ENCODE measurements at regions of chr5 and their contacts with region 1.

Region 1: GRCh38 chr5:155316070-155316714 is 302.6 kb downstream of the KIF4B start:
- DNase-seq: no peak
- H3K4me3 ChIP-seq: no peak overlapping the region
- H3K27ac ChIP-seq: no peak overlapping the region
- H3K4me1 ChIP-seq: no peaks in the 10 kb centered on the region
- H3K27me3 ChIP-seq: no peaks in the 10 kb centered on the region
- CTCF ChIP-seq: no peak
- EP300 ChIP-seq: no peak
- POLR2A ChIP-seq: no peak
- RAD21 ChIP-seq: no peak

Region 2: GRCh38 chr5:155189981-155190380 is 126.2 kb before region 1 on chr5:
- CTCF ChIA-PET with region 1: no interaction called
- POLR2A ChIA-PET with region 1: no interaction called
- DNase-seq: no peak
- H3K4me3 ChIP-seq: no peak overlapping the region
- H3K27ac ChIP-seq: no peak overlapping the region
- H3K4me1 ChIP-seq: peaks cover 0 to 11% (median 2%) of the 10 kb centered on the region in 4 experiments; a peak in 5 of 7 replicates
- H3K27me3 ChIP-seq: no peaks in the 10 kb centered on the region
- CTCF ChIP-seq: no peak
- EP300 ChIP-seq: no peak
- POLR2A ChIP-seq: no peak
- RAD21 ChIP-seq: no peak

Region 3: DNA sequence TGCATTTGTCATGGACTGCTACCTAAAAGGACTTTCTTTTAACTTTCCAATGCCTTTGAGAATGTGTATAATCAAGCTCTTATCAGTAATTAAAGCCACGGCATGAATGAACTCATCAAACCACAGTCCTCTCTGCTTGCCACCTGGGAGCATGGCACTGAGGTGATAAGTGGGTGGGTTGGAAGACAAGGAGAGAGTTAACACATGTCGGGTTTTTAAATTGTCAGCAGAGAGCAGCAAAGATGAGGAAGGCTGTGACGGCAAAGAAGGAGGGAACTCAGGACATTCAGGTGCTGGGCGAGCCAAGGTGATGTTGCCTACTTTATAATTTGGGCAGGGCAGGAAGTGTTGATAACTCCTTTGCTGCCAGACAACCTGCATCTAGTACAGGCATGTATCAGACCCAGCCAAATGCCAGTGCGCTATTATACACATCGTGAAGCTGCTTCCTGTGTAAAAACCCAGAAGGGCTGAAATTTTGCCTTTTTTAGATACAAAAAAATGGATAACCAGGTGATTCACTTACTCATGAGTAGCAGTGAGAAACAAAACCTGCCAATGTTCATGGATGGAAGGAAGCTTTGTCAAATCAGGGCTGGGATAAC is 33.6 kb before region 1 on chr5:
- CTCF ChIA-PET with region 1: no interaction called
- POLR2A ChIA-PET with region 1: no interaction called
- DNase-seq: no peak
- H3K4me3 ChIP-seq: no peak overlapping the region
- H3K27ac ChIP-seq: no peak overlapping the region
- H3K4me1 ChIP-seq: peaks cover 0 to 9% (median 3%) of the 10 kb centered on the region in 4 experiments; a peak in 2 of 7 replicates
- H3K27me3 ChIP-seq: no peaks in the 10 kb centered on the region
- CTCF ChIP-seq: no peak
- EP300 ChIP-seq: no peak
- POLR2A ChIP-seq: no peak
- RAD21 ChIP-seq: no peak

Region 4: GRCh38 chr5:155303120-155303519 is 13.1 kb before region 1 on chr5:
- CTCF ChIA-PET with region 1: interaction called, 13 read pairs
- POLR2A ChIA-PET with region 1: no interaction called
- DNase-seq: no peak
- H3K4me3 ChIP-seq: no peak overlapping the region
- H3K27ac ChIP-seq: no peak overlapping the region
- H3K4me1 ChIP-seq: no peaks in the 10 kb centered on the region
- H3K27me3 ChIP-seq: no peaks in the 10 kb centered on the region
- CTCF ChIP-seq: no peak
- EP300 ChIP-seq: no peak
- POLR2A ChIP-seq: no peak
- RAD21 ChIP-seq: no peak

Region 5: GRCh38 chr5:155402927-155403670 is 86.9 kb after region 1 on chr5:
- CTCF ChIA-PET with region 1: no interaction called
- POLR2A ChIA-PET with region 1: no interaction called
- DNase-seq: no peak
- H3K4me3 ChIP-seq: no peak overlapping the region
- H3K27ac ChIP-seq: no peak overlapping the region
- H3K4me1 ChIP-seq: no peaks in the 10 kb centered on the region
- H3K27me3 ChIP-seq: no peaks in the 10 kb centered on the region
- CTCF ChIP-seq: no peak
- EP300 ChIP-seq: no peak
- POLR2A ChIP-seq: no peak
- RAD21 ChIP-seq: no peak

Measured in H1 (cell line).